Activated CD4-positive, alpha-beta memory T cell treated with anti-CD3 and anti-CD28 coated beads, Interleukin-2, amount 10 ng/mL, durations not matched to agents 7 days and 5 days (primary cell): ENCODE measurements at regions of chr2 and their contacts with region 1.

Region 1: DNA sequence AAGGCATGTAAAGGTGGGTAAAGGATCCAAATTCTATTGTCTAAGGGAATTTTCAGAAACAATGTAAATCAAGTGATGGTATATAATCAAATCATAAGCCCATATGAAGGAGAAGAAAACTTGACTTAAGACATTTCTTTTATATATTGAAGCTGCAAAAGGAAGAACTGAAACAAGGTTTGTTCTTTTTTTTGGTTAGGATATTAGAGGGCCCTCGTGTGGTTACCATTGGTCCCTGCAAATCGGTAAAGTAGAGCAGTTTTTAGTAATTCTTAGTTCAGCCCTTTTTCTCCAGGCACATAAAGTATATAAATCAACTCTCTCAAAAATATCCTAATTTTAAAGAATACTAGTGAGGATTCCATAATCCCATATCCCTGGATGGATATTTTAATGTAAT is 105.6 kb upstream of the STK17B start:
- DNase-seq: peak; percentile 42
- H3K4me3 Mint-ChIP-seq: peak overlapping the region; percentile 27
- H3K27ac Mint-ChIP-seq: no peak overlapping the region
- H3K4me1 Mint-ChIP-seq: peaks cover 55% of the 10 kb centered on the region
- H3K27me3 Mint-ChIP-seq: no peaks in the 10 kb centered on the region

Region 2: GRCh38 chr2:196076778-196077568 is 200.0 kb before region 1 on chr2:
- CTCF ChIA-PET with region 1: interaction called, 32 read pairs
- POLR2A ChIA-PET with region 1: interaction called, 3 read pairs
- DNase-seq: no peak
- H3K4me3 Mint-ChIP-seq: no peak overlapping the region
- H3K27ac Mint-ChIP-seq: no peak overlapping the region
- H3K4me1 Mint-ChIP-seq: peaks cover 10% of the 10 kb centered on the region
- H3K27me3 Mint-ChIP-seq: no peaks in the 10 kb centered on the region

Region 3: DNA sequence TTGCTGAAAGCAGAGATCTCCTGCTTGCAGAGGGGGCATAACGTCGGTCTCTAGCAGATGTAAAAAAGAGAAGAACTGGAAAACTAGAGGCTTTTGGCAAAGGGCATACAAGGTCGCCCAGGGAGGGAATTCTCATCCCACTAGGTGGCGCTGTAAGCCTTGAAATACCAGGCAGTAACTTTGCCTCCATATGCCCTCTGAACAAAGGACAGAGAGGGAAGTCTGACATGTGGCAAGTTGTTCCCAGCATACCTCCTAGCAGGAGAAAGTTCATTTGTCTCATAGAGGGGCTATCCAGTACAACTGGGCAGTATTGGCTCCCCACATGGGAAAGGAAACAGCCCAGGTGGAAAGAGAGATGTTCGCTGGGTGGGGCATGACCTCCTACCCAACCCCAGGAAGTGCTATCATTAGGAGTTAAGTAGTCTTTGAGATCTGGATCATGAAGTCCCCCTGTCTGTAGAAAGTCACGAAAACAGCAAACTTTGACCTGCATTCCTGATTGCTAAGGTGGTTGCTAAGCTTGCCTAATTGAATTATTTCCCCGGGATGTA is 145.5 kb before region 1 on chr2:
- CTCF ChIA-PET with region 1: interaction called, 5 read pairs
- POLR2A ChIA-PET with region 1: interaction called, 10 read pairs
- DNase-seq: peak; percentile 74
- H3K4me3 Mint-ChIP-seq: no peak overlapping the region
- H3K27ac Mint-ChIP-seq: peak overlapping the region; percentile 75
- H3K4me1 Mint-ChIP-seq: peaks cover 26% of the 10 kb centered on the region
- H3K27me3 Mint-ChIP-seq: no peaks in the 10 kb centered on the region

Region 4: DNA sequence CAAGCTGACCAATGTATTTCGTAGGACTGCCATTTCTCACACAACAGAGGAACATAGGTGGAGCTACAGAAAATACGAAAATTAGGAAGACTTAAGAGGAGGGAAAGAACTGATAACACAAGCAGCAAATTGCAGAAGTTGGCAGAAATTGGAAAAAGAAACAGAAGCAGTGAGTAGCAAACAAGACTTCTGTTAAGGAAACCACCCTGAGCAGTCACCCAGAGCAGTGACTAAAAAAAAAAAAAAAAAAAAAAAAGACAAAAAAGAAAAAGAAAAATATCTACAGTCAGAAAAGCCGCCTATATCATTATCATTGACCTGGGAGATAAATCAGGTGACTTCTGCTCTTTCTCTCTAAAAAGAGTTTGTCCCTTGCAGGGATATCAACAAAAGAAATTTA is 127.1 kb before region 1 on chr2:
- CTCF ChIA-PET with region 1: interaction called, 7 read pairs
- POLR2A ChIA-PET with region 1: interaction called, 24 read pairs
- DNase-seq: no peak
- H3K4me3 Mint-ChIP-seq: peak overlapping the region; percentile 13
- H3K27ac Mint-ChIP-seq: peak overlapping the region; percentile 37
- H3K4me1 Mint-ChIP-seq: peaks cover 77% of the 10 kb centered on the region
- H3K27me3 Mint-ChIP-seq: no peaks in the 10 kb centered on the region

Region 5: DNA sequence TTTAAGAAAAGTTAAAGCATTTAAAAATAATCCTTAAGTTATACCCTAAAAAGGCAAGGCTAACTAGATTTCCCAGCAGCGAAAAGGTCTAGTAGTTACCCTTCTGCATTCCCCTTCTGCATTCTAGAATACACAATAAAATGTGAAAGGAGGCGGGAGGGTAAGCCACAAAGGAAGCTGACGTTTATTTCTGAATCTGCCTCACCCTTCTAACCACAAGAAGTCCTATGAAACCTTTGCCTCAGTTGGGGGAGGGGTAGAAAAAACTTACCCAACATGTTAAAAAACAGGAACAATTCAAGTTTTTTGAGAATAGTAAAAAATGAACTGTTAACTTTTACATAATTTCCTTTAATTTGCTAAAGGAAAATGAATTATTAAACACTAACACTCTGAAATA is 116.9 kb before region 1 on chr2:
- CTCF ChIA-PET with region 1: interaction called, 55 read pairs
- POLR2A ChIA-PET with region 1: interaction called, 56 read pairs
- DNase-seq: peak; percentile 74
- H3K4me3 Mint-ChIP-seq: peak overlapping the region; percentile 74
- H3K27ac Mint-ChIP-seq: peak overlapping the region; percentile 80
- H3K4me1 Mint-ChIP-seq: peaks cover 71% of the 10 kb centered on the region
- H3K27me3 Mint-ChIP-seq: no peaks in the 10 kb centered on the region

Region 6: GRCh38 chr2:196233021-196233804 is 43.8 kb before region 1 on chr2:
- CTCF ChIA-PET with region 1: interaction called, 25 read pairs
- POLR2A ChIA-PET with region 1: interaction called, 31 read pairs
- DNase-seq: no peak
- H3K4me3 Mint-ChIP-seq: no peak overlapping the region
- H3K27ac Mint-ChIP-seq: peak overlapping the region; percentile 85
- H3K4me1 Mint-ChIP-seq: peaks cover 91% of the 10 kb centered on the region
- H3K27me3 Mint-ChIP-seq: no peaks in the 10 kb centered on the region

Region 7: DNA sequence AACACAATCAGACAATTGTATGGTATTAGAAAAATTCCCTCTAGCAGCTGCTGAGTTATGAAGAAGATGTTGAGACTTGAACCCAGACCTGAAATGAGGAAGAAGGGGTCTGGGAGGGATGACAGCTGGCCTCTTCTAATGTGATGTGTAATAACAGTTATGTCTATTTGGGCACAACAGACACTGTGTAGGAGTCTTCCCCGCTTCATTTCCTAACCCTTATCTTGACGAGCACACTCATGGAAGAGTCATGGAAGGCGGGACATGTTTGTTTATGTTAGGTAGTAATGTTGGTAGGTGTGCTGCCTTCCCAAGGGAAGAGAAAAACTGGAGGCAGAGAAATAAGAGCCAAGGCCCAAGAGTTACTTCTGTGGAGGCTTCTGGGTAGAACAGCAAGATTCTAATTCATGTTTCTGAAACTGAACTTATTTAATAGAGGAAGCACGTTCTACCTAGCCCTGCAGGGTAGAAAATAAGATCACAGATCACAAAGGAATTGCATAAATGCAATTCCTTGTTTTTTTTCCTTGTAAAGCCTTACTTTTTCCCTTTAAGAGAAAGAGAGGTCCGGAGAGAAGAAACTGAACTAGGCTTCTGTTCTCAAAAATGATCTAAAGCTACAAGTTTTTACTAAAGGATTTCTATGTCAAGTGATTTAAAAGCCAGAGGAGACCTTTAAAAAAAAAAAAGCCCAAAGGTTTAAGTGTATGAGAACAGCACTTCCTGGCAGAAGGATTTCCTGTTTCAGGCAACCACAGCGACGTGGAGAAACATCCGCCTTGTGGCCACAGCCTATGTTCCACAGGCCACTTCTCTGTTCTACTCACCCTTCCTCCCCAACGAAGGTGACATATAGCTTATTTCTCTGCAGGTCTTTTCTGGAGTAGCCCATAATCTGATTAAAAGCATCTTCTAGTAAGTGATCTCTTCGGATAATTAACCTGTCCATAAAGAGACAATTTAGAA is 37.1 kb before region 1 on chr2:
- CTCF ChIA-PET with region 1: interaction called, 25 read pairs
- POLR2A ChIA-PET with region 1: interaction called, 31 read pairs
- DNase-seq: peak; percentile 93
- H3K4me3 Mint-ChIP-seq: peak overlapping the region; percentile 57
- H3K27ac Mint-ChIP-seq: peak overlapping the region; percentile 93
- H3K4me1 Mint-ChIP-seq: peaks cover 74% of the 10 kb centered on the region
- H3K27me3 Mint-ChIP-seq: no peaks in the 10 kb centered on the region